ENCODE measurements at regions of chr10 and their contacts with region 1.

Region 1: DNA sequence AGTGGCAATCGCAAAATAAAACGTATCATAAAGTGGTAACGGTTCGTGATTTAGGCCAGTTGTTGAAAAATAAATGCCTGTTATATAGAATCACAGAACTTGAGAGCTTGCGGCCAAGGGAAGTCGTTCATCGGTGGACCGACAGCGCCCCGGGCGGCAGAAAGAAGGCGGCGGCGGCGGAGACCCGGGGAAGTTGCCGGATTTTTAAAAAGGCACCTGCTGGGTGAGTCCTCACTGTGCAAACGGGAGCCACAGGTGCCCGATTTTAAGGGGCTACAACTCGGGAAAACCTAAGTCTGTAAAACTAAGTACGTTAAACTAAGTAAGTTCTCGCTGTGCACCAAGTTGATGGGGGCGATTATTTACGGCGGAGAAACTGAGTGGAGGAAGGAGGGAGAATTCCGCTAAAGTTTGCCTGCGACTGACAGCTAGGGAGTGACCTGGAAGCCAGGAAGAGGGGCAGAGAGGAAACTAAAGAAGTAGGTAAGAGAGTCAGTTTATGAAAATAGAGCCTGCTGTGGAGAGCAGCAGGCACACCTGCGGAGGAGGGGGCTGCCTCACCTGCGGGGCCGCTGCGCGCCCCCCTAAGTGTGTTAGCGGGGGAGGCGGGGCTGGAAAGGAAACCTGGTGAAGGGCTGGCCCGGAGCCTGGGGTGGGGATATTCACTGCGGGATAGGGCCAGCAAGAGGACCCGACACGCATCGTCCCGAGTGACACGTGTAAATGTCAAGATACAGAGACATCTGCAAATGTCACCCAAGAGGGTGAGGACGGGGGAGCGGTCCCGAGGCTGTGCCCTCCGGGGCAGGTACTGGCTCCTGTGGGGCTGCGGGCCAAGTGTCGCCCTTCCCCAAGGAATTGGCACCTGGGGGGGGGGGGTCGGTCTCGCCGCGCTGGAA is 1.0 kb downstream of the ADAM12 start:
- DNase-seq: no peak
- ATAC-seq: peak; percentile 70
- H3K4me3 ChIP-seq: no peak overlapping the region
- H3K27ac ChIP-seq: no peak overlapping the region
- H3K4me1 ChIP-seq: no peaks in the 10 kb centered on the region
- H3K27me3 ChIP-seq: peaks cover 25% of the 10 kb centered on the region; the same call in 1 of the 2 replicates
- CTCF ChIP-seq: peak; percentile 24 to 54 (median 40); a peak in 4 of 6 replicates
- POLR2A ChIP-seq: no peak
- RAD21 ChIP-seq: peak; percentile 55

Region 2: DNA sequence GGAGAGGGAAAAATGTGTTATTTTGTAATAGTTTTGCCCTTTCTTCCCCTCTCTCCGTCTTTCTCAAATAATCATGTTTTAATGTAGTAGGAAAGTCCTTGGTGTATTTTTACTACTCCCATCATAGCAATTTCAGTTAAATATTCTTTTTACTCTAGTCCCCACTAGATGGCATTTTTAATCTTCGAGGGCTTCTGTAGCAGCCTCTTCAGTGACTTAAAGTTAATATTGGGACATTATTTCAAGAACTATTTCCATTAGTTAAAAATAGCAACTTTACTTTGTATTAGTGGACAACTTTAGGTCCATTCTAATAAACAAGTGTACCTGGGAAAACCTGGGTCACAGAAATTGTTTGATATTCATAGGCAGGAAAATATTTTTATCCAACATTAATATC is 644.8 kb before region 1 on chr10:
- CTCF ChIA-PET with region 1: no interaction called
- POLR2A ChIA-PET with region 1: no interaction called
- RAD21 ChIA-PET with region 1: no interaction called
- intact Hi-C with region 1: loop called (anchors 5 kb)
- DNase-seq: no peak
- ATAC-seq: peak; percentile 53; the same call in 1 of the 2 replicates
- H3K4me3 ChIP-seq: no peak overlapping the region
- H3K27ac ChIP-seq: no peak overlapping the region
- H3K4me1 ChIP-seq: no peaks in the 10 kb centered on the region
- H3K27me3 ChIP-seq: no peaks in the 10 kb centered on the region
- CTCF ChIP-seq: peak in 2 of 3 experiments; percentile 24 to 36; a peak in 4 of 6 replicates
- POLR2A ChIP-seq: no peak
- RAD21 ChIP-seq: peak; percentile 47; the same call in 1 of the 2 replicates

Region 3: DNA sequence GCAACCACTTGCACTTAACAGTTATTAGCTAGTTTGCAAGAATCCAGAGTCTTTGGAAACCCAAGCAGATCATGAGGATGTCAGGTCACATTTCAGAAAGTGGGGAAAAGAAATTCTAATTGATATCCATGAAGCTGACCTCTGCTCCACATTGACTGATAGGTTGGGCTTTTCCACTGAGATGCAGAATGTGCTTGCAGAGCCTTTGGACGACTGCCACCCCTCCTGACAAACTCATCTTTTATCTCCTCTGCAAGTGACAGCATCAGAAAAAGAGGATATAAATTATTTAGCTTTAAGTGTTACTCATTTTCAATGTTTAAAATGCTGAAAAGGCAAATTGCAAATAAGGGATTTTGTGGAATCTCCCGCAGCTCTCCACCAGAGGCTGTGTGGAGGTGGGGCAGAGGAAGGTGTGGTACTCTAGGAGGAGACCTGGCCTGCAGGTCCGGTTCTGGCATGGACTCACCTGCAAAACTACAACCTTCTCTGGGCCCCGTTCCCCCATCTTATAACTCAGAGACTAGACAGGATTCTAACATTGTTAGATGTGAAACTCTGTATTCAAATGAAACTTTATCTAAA is 208.0 kb after region 1 on chr10:
- CTCF ChIA-PET with region 1: no interaction called
- POLR2A ChIA-PET with region 1: no interaction called
- RAD21 ChIA-PET with region 1: no interaction called
- intact Hi-C with region 1: no loop called
- DNase-seq: no peak
- ATAC-seq: no peak; the same call in 1 of the 2 replicates
- H3K4me3 ChIP-seq: no peak overlapping the region
- H3K27ac ChIP-seq: no peak overlapping the region
- H3K4me1 ChIP-seq: no peaks in the 10 kb centered on the region
- H3K27me3 ChIP-seq: peaks cover 45% of the 10 kb centered on the region
- CTCF ChIP-seq: peak in 2 of 3 experiments; percentile 16 to 28; a peak in 3 of 6 replicates
- POLR2A ChIP-seq: no peak
- RAD21 ChIP-seq: no peak